ENCODE measurements at regions of chr17 and their contacts with region 1.

Region 1: GRCh38 chr17:28335201-28335955 is at the starts of genes IFT20 and TNFAIP1:
- DNase-seq: peak; percentile 99
- ATAC-seq: peak; percentile 99
- total RNA-seq, gene IFT20: 11.6 TPM
- total RNA-seq, gene TNFAIP1: 32.9 TPM

Region 2: GRCh38 chr17:28041068-28041843 is 294.1 kb before region 1 on chr17:
- intact Hi-C with region 1: loop called (anchors 5 kb)
- DNase-seq: peak; percentile 100
- ATAC-seq: peak; percentile 99

Region 3: DNA sequence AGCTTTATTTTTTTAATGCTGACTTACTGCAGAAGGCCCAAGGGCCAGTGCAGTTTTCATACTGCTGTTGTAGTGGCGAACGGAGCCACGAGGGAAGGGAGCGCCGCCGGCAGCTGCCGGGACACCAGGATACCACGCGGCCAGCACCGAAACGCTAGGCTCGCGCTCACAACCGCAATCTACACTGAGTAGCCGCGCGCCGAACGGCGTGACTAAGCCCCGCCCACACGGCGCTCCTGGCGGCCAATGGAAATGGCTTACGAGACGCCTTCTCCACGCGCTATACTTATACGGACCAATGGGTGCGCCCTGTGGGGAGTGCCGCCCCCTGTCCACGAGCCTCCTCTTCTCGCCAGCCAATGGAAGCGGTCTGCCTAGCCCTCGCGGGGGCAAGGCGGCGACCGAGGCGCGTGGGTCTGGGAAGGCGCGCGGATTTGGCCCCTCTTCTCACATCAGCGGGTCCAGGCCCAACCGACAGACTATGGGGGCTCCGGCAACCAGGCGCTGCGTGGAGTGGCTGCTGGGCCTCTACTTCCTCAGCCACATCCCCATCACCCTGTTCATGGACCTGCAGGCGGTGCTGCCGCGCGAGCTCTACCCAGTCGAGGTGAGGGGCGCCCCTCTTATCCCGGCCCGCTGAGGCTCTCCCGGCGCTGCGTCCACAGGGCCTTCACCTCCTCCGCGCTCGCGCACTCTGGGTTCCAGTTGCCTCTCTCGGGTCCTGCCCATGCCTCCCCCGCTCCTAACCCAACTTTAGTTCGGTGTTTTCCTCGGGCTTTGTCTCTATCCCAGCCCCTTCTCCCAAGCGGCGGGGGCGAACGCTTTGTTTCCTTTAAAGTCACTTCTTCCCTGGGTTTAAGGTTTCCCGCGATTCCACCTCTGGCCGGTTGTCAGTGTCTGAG is 16.4 kb before region 1 on chr17 and contains the start of gene TMEM97:
- intact Hi-C with region 1: loop called (anchors 1 kb)
- DNase-seq: peak; percentile 98
- ATAC-seq: peak; percentile 100
- total RNA-seq, gene TMEM97: 2.3 TPM

Region 4: DNA sequence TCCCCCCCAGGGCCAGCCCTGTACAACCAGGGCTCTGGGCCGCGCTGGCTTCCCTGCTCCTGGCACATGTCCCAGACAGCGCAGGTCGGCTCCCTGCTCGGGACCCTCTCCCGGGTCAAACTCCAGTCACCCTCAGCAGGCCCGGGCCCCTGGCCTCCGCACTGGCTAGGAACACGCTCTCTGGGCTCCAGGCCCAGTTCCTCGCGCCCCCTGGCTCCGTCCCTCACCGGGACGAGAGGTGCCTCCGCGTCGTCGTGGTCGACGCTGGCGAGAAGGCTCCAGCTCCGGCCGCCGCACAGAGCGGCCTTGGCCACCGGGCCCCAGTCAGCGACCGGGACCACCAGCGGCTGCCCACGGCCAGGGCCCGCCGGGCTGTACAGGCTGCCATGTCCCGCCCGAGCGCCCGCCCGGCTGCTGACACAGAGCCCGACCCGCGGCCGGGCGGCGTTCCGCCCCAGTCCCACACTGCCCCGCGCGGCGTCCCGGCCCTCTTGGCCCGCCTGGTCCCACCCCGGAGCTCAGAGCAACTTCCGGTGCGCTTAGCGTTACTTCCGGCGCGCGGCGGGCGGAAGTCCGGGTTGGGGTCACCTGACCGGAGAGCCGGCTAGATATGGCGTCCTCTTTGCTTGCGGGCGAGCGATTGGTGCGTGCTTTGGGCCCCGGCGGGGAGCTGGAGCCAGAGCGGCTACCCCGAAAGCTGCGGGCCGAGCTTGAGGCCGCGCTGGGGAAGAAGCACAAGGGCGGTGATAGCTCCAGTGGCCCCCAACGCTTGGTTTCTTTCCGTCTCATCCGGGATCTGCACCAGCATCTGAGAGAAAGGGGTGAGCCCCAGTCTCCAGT is 21.9 kb after region 1 on chr17 and contains the start of gene POLDIP2:
- intact Hi-C with region 1: loop called (anchors 2 kb)
- DNase-seq: peak; percentile 98
- ATAC-seq: peak; percentile 100
- total RNA-seq, gene POLDIP2: 160 TPM

Region 5: DNA sequence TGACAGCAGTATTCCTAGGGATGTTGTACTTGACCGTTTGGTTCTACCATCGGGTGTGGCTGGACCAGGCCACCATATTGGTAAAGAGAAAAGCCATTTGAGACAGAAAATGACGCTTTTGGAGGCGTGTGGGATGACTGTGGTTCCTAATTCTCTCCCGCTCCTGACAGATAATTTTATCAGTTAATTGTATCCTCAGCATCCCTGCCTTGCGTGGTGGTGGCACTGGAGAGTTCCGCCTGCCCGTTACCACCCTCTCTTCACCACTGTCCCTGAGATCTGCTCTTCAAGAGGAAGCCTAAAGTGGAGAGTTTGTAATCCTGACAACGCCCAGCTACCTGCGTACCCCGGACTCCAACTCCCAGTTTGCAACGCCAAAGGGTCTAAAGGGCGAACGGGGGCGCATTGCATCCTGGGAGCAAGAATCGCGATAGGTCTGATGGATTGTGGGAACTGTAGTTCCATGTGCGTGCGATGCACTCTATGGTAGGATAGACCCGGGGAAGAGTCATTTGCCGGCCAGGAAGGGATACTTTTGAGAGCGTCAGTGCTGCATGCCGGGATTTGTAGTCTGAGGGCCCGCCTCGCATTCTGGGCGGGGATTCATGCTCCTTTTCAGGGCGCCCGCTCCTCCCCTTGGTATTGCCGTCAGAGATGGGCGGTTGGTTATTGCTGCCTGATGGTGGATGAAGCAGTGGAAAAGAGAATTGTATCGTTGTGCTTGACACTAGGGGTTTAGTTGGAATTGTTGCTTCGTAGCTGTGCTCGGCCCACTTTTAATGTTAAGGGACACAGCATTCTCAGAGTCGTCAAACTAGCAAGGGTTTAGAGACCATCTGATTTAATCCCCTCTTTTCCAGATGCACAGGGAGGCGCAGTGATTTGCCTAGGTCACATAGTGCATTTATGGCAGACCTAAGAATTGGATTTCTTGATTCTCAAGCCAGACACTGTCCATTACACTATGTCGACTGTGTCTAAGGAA is 616.9 kb after region 1 on chr17:
- intact Hi-C with region 1: loop called (anchors 5 kb)
- DNase-seq: peak; percentile 97
- ATAC-seq: peak; percentile 88